Endothelial cell of umbilical vein (primary cell): ENCODE measurements at regions of chr10 and their contacts with region 1.

Region 1: GRCh38 chr10:3776796-3777571 is 8.0 kb downstream of the KLF6 start:
- DNase-seq: peak; percentile 78
- H3K4me3 ChIP-seq: no peak overlapping the region
- H3K27ac ChIP-seq: peak overlapping the region; percentile 36
- H3K4me1 ChIP-seq: peaks cover 55% of the 10 kb centered on the region
- H3K27me3 ChIP-seq: no peaks in the 10 kb centered on the region
- CTCF ChIP-seq: no peak
- POLR2A ChIP-seq: peak; percentile 37

Region 2: DNA sequence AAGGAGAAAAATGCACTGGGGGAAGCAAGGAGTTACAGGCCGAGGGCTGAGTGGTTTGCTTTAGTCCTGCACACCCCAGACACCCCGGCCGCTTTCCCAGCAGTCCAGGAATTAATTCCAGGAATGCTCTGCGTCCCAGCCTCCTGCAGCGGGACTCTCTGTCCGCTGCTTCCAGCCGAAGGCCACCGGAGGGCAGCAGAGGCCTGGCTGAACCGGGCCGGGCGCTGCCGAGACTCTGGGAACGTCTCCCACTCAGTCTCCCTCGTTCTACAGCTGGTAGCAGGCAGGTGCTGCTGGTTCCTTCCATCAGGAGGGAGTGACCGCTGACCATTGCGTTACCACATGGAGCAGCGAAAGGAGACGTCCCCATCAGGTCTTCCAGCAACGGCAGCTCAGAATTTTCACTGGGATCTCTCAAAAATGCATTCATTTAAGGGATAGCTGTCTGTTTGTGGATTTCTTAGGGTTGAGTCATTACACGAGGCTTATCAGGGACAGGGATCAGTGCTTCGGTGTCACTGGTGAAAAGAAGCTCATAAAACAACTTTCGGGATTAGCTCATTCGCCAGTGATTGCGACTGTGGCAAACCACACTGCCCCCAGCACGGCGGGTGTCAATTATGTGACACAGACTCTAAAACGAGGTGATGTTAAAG is 579.5 kb before region 1 on chr10:
- CTCF ChIA-PET with region 1: interaction called, 23 read pairs
- POLR2A ChIA-PET with region 1: interaction called, 13 read pairs
- dilution Hi-C with region 1: no loop called
- intact Hi-C with region 1: loop called (anchors 1 kb)
- DNase-seq: peak; percentile 86
- H3K4me3 ChIP-seq: peak overlapping the region in 2 of 3 experiments; percentile 1 to 6
- H3K27ac ChIP-seq: no peak overlapping the region
- H3K4me1 ChIP-seq: peaks cover 12% of the 10 kb centered on the region
- H3K27me3 ChIP-seq: peaks cover 0 to 6% of the 10 kb centered on the region in 2 experiments
- CTCF ChIP-seq: peak; percentile 93 to 96
- POLR2A ChIP-seq: no peak

Region 3: GRCh38 chr10:3754727-3755439 is 22.1 kb before region 1 on chr10:
- CTCF ChIA-PET with region 1: interaction called, 4 read pairs
- POLR2A ChIA-PET with region 1: interaction called, 4 read pairs
- dilution Hi-C with region 1: no loop called
- intact Hi-C with region 1: loop called (anchors 1 kb)
- DNase-seq: peak; percentile 94
- H3K4me3 ChIP-seq: no peak overlapping the region
- H3K27ac ChIP-seq: peak overlapping the region; percentile 93
- H3K4me1 ChIP-seq: peaks cover 24% of the 10 kb centered on the region
- H3K27me3 ChIP-seq: no peaks in the 10 kb centered on the region
- CTCF ChIP-seq: no peak
- POLR2A ChIP-seq: peak; percentile 43

Region 4: DNA sequence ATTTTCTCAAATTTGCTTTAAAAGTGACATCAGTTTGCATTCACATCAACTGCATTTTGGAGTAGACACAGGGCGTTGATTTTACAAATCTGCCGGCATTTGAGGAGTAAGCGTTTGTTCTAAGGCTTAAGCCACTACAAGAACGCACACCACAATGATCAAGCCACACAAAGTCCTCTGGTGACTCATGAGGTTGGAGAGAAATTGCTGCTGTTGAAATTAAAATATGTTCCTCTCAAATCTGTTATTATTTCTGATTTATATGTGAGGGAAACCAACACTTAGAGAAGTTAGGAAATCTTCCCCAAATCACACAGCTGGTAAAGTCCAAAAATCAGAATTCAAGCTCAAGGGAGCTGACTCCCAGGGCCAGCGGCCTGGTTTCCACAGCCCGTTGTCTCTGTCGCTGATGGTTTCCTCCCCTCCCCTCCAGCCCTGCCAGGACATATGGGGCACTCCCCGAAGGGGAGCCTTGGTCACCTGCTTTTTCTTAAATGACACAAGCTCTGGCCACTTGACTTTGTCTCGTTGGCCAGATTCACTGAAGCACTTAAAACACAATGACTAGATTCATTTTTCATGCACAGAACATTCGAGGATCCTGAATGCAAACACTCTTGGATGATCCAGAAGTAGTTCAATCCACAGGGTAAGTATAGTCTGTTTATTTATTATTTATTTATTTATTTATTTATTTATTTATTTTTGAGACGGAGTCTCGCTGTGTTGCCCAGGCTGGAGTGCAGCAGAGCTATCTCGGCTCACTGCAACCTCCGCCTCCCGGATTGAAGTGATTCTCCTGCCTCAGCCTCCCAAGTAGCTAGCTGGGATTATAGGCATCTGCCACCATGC is 37.2 kb after region 1 on chr10:
- CTCF ChIA-PET with region 1: no interaction called
- POLR2A ChIA-PET with region 1: no interaction called
- dilution Hi-C with region 1: no loop called
- intact Hi-C with region 1: no loop called
- DNase-seq: no peak
- H3K4me3 ChIP-seq: no peak overlapping the region
- H3K27ac ChIP-seq: no peak overlapping the region
- H3K4me1 ChIP-seq: peaks cover 26% of the 10 kb centered on the region
- H3K27me3 ChIP-seq: no peaks in the 10 kb centered on the region
- CTCF ChIP-seq: no peak
- POLR2A ChIP-seq: no peak